K562 (cell line): ENCODE measurements at regions of chr5 and their contacts with region 1.

Region 1: DNA sequence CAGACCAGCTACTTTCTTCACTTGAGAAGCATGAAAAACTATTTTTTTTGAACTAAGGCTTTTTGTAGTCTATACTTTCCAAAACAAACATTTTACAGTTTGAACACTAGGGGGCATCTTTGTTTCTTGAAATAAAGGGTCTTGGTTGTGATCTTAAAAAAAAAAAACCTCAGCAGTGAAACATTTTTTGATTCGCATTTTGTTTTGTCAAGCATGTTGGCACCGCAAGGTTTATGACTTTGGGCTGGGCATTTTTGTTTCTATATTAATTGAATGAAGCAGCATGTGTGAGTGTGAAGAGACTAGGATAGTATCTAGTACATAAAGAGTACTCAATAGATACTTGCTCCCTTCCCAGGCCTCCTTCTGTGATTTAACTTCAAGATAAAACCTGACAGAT is 31.6 kb upstream of the ACOT12 start:
- DNase-seq: peak; percentile 16 to 28 (median 19)
- ATAC-seq: peak; percentile 78
- H3K4me3 ChIP-seq: no peak overlapping the region
- H3K27ac ChIP-seq: no peak overlapping the region
- H3K4me1 ChIP-seq: peaks cover 0 to 3% of the 10 kb centered on the region in 2 experiments; a peak in 3 of 5 replicates
- H3K27me3 ChIP-seq: no peaks in the 10 kb centered on the region
- CTCF ChIP-seq: peak; percentile 46 to 66 (median 47); a peak in 4 of 6 replicates
- EP300 ChIP-seq: no peak
- POLR2A ChIP-seq: no peak
- RAD21 ChIP-seq: peak; percentile 66 to 70

Region 2: DNA sequence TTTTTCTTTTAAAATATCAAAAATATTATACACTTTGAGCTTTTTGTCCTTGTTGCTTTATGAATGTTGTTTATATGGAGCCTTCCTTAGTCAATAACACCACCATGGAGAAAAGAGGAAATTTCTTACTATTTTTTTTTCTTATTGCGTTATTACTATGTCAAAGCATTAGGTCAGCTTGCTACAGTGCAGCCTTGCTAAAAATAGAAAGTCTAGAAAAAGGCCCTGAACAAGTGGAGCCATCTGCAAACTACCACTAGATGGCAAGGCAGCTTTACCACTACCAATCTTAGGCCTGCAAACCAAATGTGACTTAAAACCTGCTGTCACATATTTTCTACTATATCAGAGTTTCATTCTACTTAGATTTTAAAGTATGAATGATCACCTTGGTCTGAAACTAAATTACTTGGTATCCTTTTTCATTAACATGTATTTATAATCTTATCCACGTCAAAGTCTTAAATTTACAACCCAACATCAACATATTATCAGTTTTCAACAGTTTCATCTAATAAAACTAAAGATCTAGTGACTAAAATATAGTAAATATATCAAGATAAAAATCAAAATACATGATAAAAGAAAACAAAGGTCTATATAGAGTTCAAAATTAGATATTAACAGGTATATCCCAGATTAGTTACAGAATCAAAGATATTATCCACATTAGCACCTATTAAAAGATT is 81.5 kb after region 1 on chr5:
- CTCF ChIA-PET with region 1: no interaction called
- POLR2A ChIA-PET with region 1: no interaction called
- in situ Hi-C with region 1: no loop called
- intact Hi-C with region 1: loop called (anchors 10 kb)
- DNase-seq: peak; percentile 30 to 83 (median 61)
- ATAC-seq: peak; percentile 100
- H3K4me3 ChIP-seq: no peak overlapping the region
- H3K27ac ChIP-seq: no peak overlapping the region; the same call in 2 of the 3 replicates
- H3K4me1 ChIP-seq: peaks cover 0 to 9% of the 10 kb centered on the region in 2 experiments; a peak in 2 of 5 replicates
- H3K27me3 ChIP-seq: no peaks in the 10 kb centered on the region
- CTCF ChIP-seq: peak; percentile 72 to 93 (median 80)
- EP300 ChIP-seq: no peak; the same call in 1 of the 2 replicates
- POLR2A ChIP-seq: no peak
- RAD21 ChIP-seq: peak; percentile 93 to 94